HepG2 (cell line): ENCODE measurements at regions of chr16 and their contacts with region 1.

Region 1: DNA sequence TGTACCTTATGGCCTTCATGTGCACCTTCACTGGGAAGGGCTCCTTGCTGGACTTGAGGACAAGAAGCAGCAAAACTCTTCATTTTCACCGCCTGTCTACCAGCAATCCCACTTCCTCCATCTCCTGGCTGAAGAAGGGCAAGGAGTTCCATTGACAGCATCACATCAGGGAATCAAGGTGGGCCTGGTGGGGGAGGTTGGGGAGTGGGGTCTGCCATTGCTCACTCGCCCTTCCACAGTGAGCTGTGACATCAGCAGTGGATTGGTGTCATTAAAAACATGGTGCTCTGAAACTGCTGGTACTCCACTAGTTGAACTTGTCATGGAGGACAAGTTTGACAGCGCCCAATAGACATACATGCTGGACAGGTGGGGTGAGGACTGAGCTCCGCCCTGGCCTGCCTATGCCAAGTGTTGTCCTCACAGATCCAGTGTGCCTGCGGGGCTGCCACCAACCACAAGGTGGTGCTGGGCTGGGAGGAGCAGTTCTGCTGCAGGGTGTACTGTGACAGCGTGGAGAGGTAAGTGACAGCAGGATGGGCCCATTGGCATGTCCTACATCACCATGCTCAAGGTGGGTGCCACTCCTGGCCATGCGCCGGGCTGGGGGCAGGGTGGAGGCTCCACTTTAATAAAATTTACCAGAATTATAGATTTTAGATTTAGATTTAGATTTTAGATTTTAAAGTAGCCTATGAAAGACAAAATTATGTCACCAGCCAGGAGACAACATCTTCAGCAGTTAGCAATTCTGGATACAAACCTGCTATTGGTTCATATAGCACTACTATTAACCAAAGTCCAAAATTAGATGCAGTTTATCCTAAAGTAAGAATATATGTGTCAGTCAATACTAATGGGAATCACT is 1729.1 kb downstream of the TP53TG3F start:
- DNase-seq: peak; percentile 12
- ATAC-seq: peak; percentile 87
- H3K4me3 ChIP-seq: no peak overlapping the region
- H3K27ac ChIP-seq: no peak overlapping the region
- H3K4me1 ChIP-seq: no peaks in the 10 kb centered on the region
- H3K27me3 ChIP-seq: no peaks in the 10 kb centered on the region
- CTCF ChIP-seq: peak; percentile 19; the same call in 1 of the 2 replicates
- EP300 ChIP-seq: no peak
- POLR2A ChIP-seq: no peak
- RAD21 ChIP-seq: no peak

Region 2: DNA sequence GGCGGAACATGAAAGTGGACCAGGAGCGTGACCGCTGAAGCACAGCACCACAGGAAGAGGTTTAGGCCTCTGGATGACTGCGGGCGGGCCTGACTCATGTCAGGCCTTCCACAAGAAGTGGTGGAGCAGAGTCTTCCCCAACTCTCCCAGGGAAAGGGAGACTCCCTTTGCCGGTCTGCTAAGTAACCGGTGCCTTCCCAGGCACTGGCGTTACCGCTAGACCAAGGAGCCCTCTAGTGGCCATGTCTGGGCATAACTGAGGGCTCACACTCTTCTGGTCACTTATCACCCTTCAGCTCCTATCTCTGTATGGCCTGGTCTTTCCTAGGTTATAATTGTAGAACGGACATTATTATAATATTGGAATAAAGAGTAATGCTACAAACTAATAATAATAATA is 202.8 kb after region 1 on chr16:
- CTCF ChIA-PET with region 1: no interaction called
- POLR2A ChIA-PET with region 1: no interaction called
- in situ Hi-C with region 1: no loop called
- intact Hi-C with region 1: loop called (anchors 2 kb)
- DNase-seq: peak; percentile 43
- ATAC-seq: peak; percentile 85
- H3K4me3 ChIP-seq: no peak overlapping the region
- H3K27ac ChIP-seq: no peak overlapping the region
- H3K4me1 ChIP-seq: no peaks in the 10 kb centered on the region
- H3K27me3 ChIP-seq: no peaks in the 10 kb centered on the region
- CTCF ChIP-seq: peak; percentile 76
- EP300 ChIP-seq: no peak
- POLR2A ChIP-seq: no peak
- RAD21 ChIP-seq: peak; percentile 17; the same call in 1 of the 2 replicates